ENCODE measurements at regions of chr17 and their contacts with region 1.

Region 1: DNA sequence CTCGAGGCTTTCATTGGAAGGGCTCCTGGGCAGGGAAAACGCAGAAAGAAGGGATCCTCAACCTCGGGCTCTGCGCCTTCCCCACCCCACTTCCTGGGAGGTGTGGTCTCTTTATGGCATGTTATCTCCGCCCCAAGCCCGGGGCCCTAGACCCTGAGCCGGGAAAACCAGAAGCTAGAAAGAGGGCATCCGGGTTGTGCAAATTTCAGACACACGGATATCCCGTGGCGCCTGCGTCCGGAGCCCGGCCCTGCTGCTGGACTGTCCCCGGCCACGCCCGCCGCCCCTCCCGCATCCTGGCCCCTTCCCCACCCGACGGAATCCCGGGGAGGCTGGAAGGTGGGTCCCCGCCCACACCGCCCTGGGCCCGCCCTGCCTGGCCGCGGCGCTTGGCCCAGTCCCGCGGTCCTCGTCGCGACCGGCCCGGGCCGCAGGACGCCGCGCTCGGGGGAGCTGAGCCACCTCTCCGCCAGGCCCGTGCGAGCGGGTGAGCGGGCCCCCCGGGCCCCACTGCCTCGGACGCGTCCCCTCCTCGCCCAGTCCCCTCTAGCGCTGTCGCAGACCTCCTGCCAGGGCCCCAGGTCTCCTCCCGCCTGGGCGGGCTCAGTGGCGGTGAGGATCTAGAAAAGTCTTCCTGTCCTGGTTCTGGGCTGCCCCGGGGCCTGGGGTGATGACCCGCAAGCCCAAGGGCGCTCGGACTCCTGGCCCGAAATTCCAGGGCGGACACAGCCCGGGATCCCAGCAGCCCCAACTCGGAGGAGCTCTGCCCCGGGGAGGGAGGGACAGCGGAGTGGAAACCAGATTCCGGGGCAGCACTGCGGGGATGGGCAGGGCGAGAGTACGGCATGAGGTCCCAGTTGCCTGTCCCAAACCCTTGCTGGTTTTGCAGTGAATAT is at the start of gene SLC16A5:
- DNase-seq: peak; percentile 99
- H3K4me3 ChIP-seq: peak within 1 kb of the TSS; percentile 74
- H3K4me3 Mint-ChIP-seq: peak within 1 kb of the TSS; percentile 92
- H3K27ac Mint-ChIP-seq: peak within 1 kb of the TSS; percentile 92
- H3K4me1 ChIP-seq: peaks cover 54% of the 10 kb centered on the region
- H3K4me1 Mint-ChIP-seq: peaks cover 57% of the 10 kb centered on the region
- H3K27me3 ChIP-seq: no peaks in the 10 kb centered on the region
- H3K27me3 Mint-ChIP-seq: no peaks in the 10 kb centered on the region
- CTCF ChIP-seq: no peak
- total RNA-seq, gene SLC16A5: 27.7 and 33.8 TPM in 2 replicates

Region 2: DNA sequence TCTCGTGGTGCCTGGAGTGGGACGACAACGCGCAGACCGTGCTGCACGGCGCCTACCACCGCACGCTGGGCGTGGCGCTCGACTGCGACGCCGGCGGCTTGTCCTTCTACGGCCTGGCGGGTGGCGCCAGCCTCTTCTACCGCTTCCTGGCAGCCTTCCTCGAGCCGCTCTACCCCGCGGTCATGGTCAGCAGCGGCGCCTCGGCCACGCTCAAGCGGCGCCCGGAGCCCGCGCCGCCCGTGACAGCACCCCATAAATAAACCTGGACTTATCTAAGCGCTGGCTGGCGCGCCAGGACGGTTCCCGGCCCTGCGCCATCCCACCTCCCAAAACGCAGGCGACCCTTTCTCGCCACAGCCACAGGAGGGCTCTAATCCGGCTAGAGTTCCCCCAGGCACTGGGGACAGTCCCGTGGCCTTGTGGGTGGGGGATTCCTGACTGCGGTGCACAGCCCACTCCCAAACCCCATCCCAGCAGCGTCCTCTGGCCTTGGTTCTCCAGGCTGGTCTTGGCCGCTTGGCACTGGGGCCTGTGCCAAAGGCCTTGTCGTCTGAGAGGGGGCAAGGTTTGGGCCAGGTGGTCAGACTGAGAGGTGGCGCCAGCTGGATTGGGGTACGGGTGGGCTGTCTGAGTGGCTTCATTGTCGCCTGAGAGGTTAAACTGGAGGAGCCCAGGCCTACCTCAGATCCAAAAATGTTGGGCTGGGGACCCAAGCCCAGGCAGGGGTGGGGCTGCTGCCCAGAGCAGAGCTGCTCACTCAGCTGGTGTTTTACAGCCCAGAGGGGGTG is 10.1 kb before region 1 on chr17:
- CTCF ChIA-PET with region 1: interaction called, 7 read pairs
- POLR2A ChIA-PET with region 1: interaction called, 45 read pairs
- intact Hi-C with region 1: loop called (anchors 1 kb)
- DNase-seq: peak; percentile 77 to 79
- H3K4me3 ChIP-seq: peak overlapping the region; percentile 54
- H3K4me3 Mint-ChIP-seq: peak overlapping the region; percentile 95
- H3K27ac Mint-ChIP-seq: peak overlapping the region; percentile 93
- H3K4me1 ChIP-seq: peaks cover 32% of the 10 kb centered on the region
- H3K4me1 Mint-ChIP-seq: peaks cover 22% of the 10 kb centered on the region
- H3K27me3 ChIP-seq: no peaks in the 10 kb centered on the region
- H3K27me3 Mint-ChIP-seq: no peaks in the 10 kb centered on the region
- CTCF ChIP-seq: peak in 1 of 2 experiments; percentile 55

Region 3: GRCh38 chr17:75124041-75124818 is 36.4 kb after region 1 on chr17:
- CTCF ChIA-PET with region 1: no interaction called
- POLR2A ChIA-PET with region 1: interaction called, 13 read pairs
- intact Hi-C with region 1: no loop called
- DNase-seq: peak; percentile 47 to 76
- H3K4me3 ChIP-seq: no peak overlapping the region
- H3K4me3 Mint-ChIP-seq: no peak overlapping the region
- H3K27ac Mint-ChIP-seq: peak overlapping the region; percentile 85
- H3K4me1 ChIP-seq: peaks cover 14% of the 10 kb centered on the region
- H3K4me1 Mint-ChIP-seq: peaks cover 17% of the 10 kb centered on the region
- H3K27me3 ChIP-seq: no peaks in the 10 kb centered on the region
- H3K27me3 Mint-ChIP-seq: no peaks in the 10 kb centered on the region
- CTCF ChIP-seq: no peak

Measured in Caco-2 (cell line).